Astrocyte of the cerebellum (primary cell): ENCODE measurements at regions of chr13 and their contacts with region 1.

Region 1: GRCh38 chr13:95698047-95698749 is 21.3 kb downstream of the DNAJC3 start:
- DNase-seq: no peak
- H3K4me3 ChIP-seq: no peak overlapping the region
- CTCF ChIP-seq: peak; percentile 38

Region 2: GRCh38 chr13:95607363-95607762 is 90.8 kb before region 1 on chr13:
- in situ Hi-C with region 1: no loop called
- DNase-seq: peak; percentile 26
- H3K4me3 ChIP-seq: no peak overlapping the region
- CTCF ChIP-seq: no peak

Region 3: GRCh38 chr13:95771905-95772304 is 73.7 kb after region 1 on chr13:
- in situ Hi-C with region 1: loop called (anchors 5 kb)
- DNase-seq: no peak
- H3K4me3 ChIP-seq: no peak overlapping the region
- CTCF ChIP-seq: no peak

Region 4: DNA sequence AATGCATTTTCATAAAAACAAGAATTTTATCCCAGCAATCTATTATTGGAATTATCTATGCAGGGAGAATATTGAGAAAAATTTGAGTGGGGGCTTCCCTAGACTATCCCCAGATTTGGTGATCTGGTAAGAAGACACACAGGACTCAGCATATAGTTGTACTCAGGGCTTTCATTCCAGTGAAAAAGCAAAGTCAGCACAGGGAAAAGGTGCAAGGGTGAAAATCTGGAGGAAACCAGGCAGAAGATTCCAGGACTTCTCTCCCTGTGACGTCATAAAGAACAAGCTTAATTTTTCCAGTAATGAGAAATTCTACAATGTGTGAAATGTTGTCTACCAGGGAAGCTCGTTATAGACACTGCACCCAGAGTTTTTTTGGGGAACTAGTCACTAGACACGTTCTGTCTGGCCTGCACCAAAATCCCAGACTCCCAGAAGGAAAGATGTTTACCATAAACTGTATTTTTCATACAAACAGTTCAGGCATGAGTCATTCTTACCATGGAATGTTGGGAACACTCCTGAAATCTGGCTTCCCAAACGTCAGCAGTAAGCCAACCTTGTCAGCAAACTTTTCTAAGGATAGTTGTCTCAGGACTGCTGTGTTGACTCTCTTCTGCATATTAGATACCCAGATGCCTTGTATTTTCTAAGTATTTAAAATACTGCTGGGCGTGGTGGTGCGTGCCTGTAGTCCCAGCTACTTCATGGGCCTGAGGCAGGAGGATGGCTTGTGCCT is 86.1 kb after region 1 on chr13:
- in situ Hi-C with region 1: no loop called
- DNase-seq: peak; percentile 78
- H3K4me3 ChIP-seq: no peak overlapping the region
- CTCF ChIP-seq: no peak